Common myeloid progenitor, CD34-positive (primary cell): ENCODE measurements at regions of chr11 and their contacts with region 1.

Region 1: DNA sequence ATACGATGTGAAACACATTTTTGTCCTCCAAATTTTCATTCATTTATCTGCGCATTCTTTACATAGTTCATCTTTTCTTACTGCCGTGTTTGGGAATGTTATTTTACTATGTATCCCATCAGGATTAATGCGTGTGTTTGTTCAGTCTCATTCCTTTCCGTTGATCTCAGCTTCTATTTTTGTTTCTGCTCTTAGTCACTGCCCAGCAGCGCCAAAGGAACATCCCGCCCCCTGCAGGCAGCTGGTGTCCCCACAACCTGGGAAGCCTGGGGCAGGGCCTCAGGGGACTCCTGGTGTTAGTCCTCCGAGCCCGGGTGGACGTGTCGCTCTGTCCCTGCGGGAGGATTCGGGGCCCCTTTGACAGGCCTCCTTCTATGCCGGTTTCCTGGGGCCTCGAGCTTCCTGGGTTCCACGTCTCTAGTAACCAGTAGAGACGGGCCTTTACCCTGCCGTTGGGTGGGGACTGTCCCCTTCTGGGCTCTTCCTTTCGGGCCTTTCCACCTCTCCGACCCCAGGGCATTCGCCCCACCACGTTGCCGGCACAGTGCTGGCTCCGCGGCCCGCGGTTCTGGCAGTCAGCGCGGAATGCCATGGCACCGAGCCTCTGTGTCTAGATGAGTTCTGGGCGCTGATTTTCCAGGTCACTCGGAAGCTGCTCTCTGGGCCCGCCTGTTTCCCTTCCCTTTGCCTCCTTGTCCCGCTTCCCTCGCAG is 39.8 kb downstream of the WEE1 start:
- DNase-seq: peak; percentile 86 to 89 (median 89)
- H3K4me3 ChIP-seq: peak overlapping the region; percentile 42 to 82 (median 69)
- H3K27ac ChIP-seq: peak overlapping the region; percentile 64 to 86
- H3K4me1 ChIP-seq: peaks cover 14 to 38% (median 28%) of the 10 kb centered on the region in 4 experiments
- H3K27me3 ChIP-seq: no peaks in the 10 kb centered on the region

Region 2: GRCh38 chr11:9534791-9535781 is 78.2 kb before region 1 on chr11:
- CTCF ChIA-PET with region 1: interaction called, 58 read pairs
- POLR2A ChIA-PET with region 1: interaction called, 3 read pairs
- DNase-seq: peak; percentile 65 to 81 (median 73)
- H3K4me3 ChIP-seq: no peak overlapping the region
- H3K27ac ChIP-seq: no peak overlapping the region
- H3K4me1 ChIP-seq: no peaks in the 10 kb centered on the region
- H3K27me3 ChIP-seq: no peaks in the 10 kb centered on the region

Region 3: DNA sequence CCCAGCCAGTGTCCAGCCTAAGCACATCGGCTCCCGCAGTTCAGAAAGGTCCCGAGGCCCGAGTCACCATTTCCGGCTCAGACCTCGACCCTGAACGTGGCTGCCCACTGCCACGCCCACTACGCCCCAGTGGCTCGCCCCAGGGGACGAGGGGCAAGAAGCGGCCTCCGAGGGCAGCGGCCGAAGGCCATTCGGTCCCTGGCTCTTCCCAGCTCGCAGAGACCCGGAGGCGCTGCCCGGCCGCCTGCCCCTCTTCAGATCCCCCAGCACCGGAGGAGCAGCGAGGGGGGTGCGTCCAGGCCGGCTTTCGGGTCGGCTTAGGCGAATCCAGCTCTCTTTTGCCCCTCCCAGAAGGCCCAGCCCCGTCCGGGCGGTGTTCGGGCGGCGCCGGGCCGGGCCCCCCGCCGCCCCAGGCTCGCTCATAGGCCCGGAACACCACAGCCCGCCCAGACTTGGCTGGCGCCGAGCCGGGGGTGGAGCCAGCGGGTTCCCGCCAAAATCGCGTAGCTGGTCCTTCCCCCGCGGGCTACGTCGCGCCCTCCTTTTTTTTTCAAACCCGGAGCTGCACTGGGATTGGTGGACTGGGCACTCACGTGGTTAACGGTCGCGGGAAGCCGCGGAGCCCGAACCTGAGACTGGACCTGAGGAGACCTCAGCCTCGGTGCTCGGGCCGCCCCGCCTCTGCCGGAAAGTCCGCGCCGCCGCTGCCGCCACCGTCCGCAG is 40.1 kb before region 1 on chr11 and contains the start of gene WEE1:
- CTCF ChIA-PET with region 1: interaction called, 33 read pairs
- POLR2A ChIA-PET with region 1: interaction called, 3 read pairs
- DNase-seq: peak; percentile 97 to 99 (median 97)
- H3K4me3 ChIP-seq: peak within 1 kb of the TSS; percentile 81 to 95 (median 89)
- H3K27ac ChIP-seq: peak within 1 kb of the TSS; percentile 78 to 90
- H3K4me1 ChIP-seq: peaks cover 14 to 45% (median 30%) of the 10 kb centered on the region in 4 experiments
- H3K27me3 ChIP-seq: no peaks in the 10 kb centered on the region

Region 4: GRCh38 chr11:9601037-9601875 is 12.0 kb before region 1 on chr11:
- CTCF ChIA-PET with region 1: interaction called, 13 read pairs
- POLR2A ChIA-PET with region 1: interaction called, 4 read pairs
- DNase-seq: peak; percentile 81 to 92 (median 92)
- H3K4me3 ChIP-seq: peak overlapping the region; percentile 8 to 71 (median 32)
- H3K27ac ChIP-seq: peak overlapping the region; percentile 47 to 60
- H3K4me1 ChIP-seq: peaks cover 5 to 30% (median 22%) of the 10 kb centered on the region in 4 experiments
- H3K27me3 ChIP-seq: no peaks in the 10 kb centered on the region

Region 5: DNA sequence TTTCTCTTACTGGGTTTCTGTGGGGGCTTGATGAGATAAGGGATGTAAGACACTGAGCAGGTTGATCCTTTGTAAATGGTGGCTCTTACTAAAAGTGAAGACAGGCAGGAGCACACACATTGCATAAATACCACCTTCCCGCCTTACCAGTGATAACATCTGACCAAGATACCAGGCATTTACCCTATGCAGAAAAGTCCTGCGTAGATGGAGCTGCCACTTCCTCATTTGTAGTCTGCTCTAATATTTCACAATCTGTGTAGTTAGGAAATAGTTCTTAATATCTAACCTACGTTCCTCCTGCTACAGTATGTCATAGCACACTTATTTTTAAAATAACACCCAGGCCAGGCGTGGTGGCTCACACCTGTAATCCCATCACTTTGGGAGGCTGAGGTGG is 26.7 kb after region 1 on chr11:
- CTCF ChIA-PET with region 1: interaction called, 12 read pairs
- POLR2A ChIA-PET with region 1: interaction called, 3 read pairs
- DNase-seq: peak; percentile 78 to 92 (median 88)
- H3K4me3 ChIP-seq: no peak overlapping the region
- H3K27ac ChIP-seq: no peak overlapping the region
- H3K4me1 ChIP-seq: peaks cover 4 to 48% (median 14%) of the 10 kb centered on the region in 4 experiments
- H3K27me3 ChIP-seq: no peaks in the 10 kb centered on the region

Region 6: DNA sequence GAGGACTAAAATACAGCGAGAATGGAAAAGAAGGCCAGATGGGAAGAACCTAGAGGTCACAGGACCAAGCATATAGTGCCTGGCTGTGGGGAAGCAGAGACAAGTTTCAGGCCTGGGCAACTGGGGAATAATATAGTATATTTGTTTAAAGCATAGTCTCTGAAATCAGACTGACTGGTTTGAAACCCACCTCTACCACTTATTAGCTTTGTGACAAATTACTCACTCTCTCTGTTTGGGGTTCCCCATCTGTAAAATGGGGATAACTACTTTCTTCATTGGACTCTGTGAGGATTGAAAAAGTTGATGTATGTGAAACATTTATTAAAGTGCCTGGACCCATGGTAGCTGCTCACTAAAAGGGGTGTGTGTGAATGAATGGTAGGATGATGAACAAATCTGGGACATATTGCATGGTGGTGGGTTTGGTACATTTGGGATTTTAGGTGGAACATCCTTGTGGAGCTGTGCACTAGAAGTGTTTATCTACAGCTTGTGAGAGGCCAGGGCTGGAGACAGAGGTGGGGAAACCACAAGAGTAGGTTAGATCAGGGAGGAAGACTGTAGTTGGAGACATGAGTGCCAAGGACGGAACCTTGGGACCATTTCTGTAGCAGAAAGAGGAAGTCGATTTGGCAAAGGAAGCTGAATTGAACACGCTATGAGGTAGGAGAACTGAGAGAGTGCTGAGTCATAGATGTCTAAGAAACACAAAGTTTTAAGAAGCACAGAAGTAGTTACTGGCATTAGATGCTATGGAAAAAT is 103.2 kb after region 1 on chr11:
- CTCF ChIA-PET with region 1: interaction called, 11 read pairs
- POLR2A ChIA-PET with region 1: no interaction called
- DNase-seq: peak; percentile 93 to 99 (median 98)
- H3K4me3 ChIP-seq: peak overlapping the region in 4 of 7 experiments; percentile 7 to 65 (median 36)
- H3K27ac ChIP-seq: peak overlapping the region; percentile 83 to 84
- H3K4me1 ChIP-seq: peaks cover 36 to 68% (median 60%) of the 10 kb centered on the region in 4 experiments
- H3K27me3 ChIP-seq: no peaks in the 10 kb centered on the region